ENCODE measurements at regions of chr9 and their contacts with region 1.

Region 1: GRCh38 chr9:96150324-96151227 is 151.4 kb downstream of the HSD17B3 start:
- DNase-seq: no peak
- H3K4me3 ChIP-seq: no peak overlapping the region
- H3K27ac ChIP-seq: no peak overlapping the region
- H3K4me1 ChIP-seq: no peaks in the 10 kb centered on the region
- H3K27me3 ChIP-seq: no peaks in the 10 kb centered on the region
- CTCF ChIP-seq: no peak

Region 2: GRCh38 chr9:96199006-96199405 is 48.4 kb after region 1 on chr9:
- CTCF ChIA-PET with region 1: no interaction called
- dilution Hi-C with region 1: loop called (anchors 5 kb)
- in situ Hi-C with region 1: no loop called
- intact Hi-C with region 1: no loop called
- DNase-seq: no peak
- H3K4me3 ChIP-seq: no peak overlapping the region
- H3K27ac ChIP-seq: no peak overlapping the region
- H3K4me1 ChIP-seq: no peaks in the 10 kb centered on the region
- H3K27me3 ChIP-seq: peaks cover 3% of the 10 kb centered on the region
- CTCF ChIP-seq: no peak